ENCODE measurements at regions of chr10 and their contacts with region 1.

Region 1: GRCh38 chr10:22003079-22003913 is at the start of gene DNAJC1:
- DNase-seq: peak; percentile 98 to 99 (median 99)
- ATAC-seq: peak; percentile 97 to 99 (median 97)
- H3K4me3 ChIP-seq: peak within 1 kb of the TSS; percentile 69 to 87 (median 82)
- H3K27ac ChIP-seq: peak within 1 kb of the TSS; percentile 79 to 90 (median 89)
- H3K4me1 ChIP-seq: peaks cover 0 to 8% (median 3%) of the 10 kb centered on the region in 4 donors
- H3K27me3 ChIP-seq: no peaks in the 10 kb centered on the region
- CTCF ChIP-seq: peak in 1 of 4 donors; percentile 25
- POLR2A ChIP-seq: peak; percentile 95
- total RNA-seq, gene DNAJC1: 16.0 to 106 (median 27.8) TPM

Region 2: GRCh38 chr10:22997102-22997501 is 993.8 kb after region 1 on chr10:
- intact Hi-C with region 1: loop called in 1 of 2 experiments (anchors 10 kb)
- DNase-seq: no peak
- ATAC-seq: no peak
- H3K4me3 ChIP-seq: no peak overlapping the region
- H3K27ac ChIP-seq: no peak overlapping the region
- H3K4me1 ChIP-seq: peaks cover 0 to 6% (median 2%) of the 10 kb centered on the region in 4 donors
- H3K27me3 ChIP-seq: no peaks in the 10 kb centered on the region
- CTCF ChIP-seq: no peak
- POLR2A ChIP-seq: no peak

Measured in right lobe of liver (tissue), 6 donors.